Testis (tissue), 5 donors: ENCODE measurements at regions of chr4 and their contacts with region 1.

Region 1: DNA sequence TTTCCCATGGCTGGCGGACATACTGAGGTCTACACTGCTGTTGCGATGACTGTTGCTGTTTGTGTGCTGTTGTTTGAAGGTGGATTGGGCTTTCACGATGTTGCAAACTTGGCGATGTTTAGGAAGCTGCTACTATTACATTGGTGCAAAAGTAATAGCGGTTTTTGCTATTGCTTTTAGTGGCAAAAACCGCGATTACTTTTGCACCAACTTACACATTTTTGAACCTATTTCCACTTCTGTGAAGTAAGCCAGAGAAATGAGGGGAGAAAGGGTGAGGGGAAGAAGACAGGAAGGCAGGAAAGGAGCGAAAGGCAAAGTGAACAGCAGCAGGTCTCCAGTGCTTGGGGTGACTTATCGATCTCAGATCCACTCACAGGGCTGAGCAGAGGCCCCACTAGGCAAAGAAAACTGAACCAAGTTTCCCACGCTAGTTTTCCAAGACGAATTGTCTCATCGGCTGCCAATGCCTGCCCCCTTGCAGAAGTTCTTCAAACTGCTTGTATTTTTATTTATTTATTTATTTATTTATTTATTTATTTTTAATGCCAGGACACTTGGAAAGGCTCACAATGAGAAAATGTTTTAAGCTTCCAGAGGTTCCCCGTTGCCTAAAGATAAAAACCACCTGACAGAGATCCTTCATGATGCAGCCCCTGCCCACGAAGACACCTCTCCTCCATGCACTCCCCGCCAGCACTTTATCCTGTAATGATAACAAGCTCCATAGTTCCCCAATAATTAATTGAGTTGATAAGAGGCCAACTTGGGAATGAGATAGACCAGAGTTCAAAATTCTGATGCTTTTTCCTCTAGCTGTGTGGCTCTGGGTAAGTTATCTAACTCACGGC is 43.3 kb downstream of the QDPR start:
- DNase-seq: peak; percentile 31
- H3K4me3 ChIP-seq: no peak overlapping the region
- H3K27ac ChIP-seq: no peak overlapping the region
- H3K4me1 ChIP-seq: no peaks in the 10 kb centered on the region
- H3K27me3 ChIP-seq: no peaks in the 10 kb centered on the region
- CTCF ChIP-seq: peak in 2 of 3 experiments; percentile 40 to 77
- POLR2A ChIP-seq: no peak

Region 2: DNA sequence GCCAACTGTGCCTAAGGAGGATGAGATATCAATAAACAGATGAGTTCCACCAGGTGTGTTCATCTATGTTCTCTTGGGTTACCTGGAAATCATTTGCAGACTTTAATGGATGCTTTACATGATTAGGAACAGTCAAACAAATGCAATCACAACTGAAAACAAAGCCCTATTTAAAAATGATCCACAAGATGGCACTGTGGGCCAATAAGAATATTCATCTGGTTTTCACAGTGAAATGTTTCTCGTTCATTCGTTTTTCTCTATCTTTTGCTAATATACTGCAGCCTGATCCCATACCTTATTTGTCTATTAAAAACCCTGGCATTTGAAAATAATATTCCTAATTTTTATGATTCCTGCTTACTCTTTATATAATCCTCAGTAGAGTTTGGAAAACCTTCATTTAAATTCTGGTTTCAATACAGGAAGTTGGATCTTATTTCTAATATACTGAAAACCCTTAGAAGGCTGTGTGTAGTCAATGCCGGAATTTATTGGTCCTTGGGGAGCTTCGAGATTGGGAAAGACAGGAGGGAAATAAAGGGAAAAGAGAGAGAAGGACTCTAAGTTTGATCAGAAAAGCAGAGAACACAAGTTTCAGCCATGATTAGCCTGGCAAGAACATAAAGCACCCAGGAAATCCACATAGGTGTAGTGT is 1178.6 kb before region 1 on chr4:
- intact Hi-C with region 1: loop called (anchors 5 kb)
- DNase-seq: no peak
- H3K4me3 ChIP-seq: no peak overlapping the region
- H3K27ac ChIP-seq: no peak overlapping the region
- H3K4me1 ChIP-seq: peaks cover 8% of the 10 kb centered on the region
- H3K27me3 ChIP-seq: no peaks in the 10 kb centered on the region
- CTCF ChIP-seq: peak in 2 of 3 experiments; percentile 34 to 56
- POLR2A ChIP-seq: no peak

Region 3: DNA sequence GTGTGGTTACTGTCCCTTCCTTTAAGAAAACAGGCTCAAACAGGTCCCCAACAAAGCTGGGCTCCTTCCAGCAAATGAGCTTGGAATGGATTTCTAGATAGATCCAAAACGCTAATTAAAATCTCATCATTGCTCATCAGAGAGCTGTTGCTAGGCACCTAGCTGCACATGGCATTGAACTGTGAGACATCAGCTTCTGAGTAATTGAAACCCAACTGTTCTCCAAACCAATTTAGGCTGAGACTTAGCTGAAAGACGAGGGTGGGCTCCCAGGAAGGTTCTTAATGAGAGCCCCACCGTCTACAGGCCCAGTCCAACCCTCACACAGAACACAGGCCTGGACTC is 253.7 kb after region 1 on chr4:
- intact Hi-C with region 1: no loop called
- DNase-seq: no peak
- H3K4me3 ChIP-seq: no peak overlapping the region
- H3K27ac ChIP-seq: no peak overlapping the region
- H3K4me1 ChIP-seq: no peaks in the 10 kb centered on the region
- H3K27me3 ChIP-seq: no peaks in the 10 kb centered on the region
- CTCF ChIP-seq: no peak
- POLR2A ChIP-seq: no peak